ENCODE measurements at regions of chr2 and their contacts with region 1.

Region 1: GRCh38 chr2:10457911-10458604 is 9.9 kb upstream of the ODC1 start:
- ATAC-seq: peak in 2 of 8 experiments; percentile 43 to 46
- H3K4me3 ChIP-seq: no peak overlapping the region
- H3K27ac ChIP-seq: no peak overlapping the region
- H3K4me1 ChIP-seq: peaks cover 7 to 13% of the 10 kb centered on the region in 2 donors

Region 2: GRCh38 chr2:9897331-9897737 is 560.7 kb before region 1 on chr2:
- in situ Hi-C with region 1: no loop called
- ATAC-seq: peak in 5 of 8 experiments; percentile 16 to 97 (median 65)
- H3K4me3 ChIP-seq: no peak overlapping the region
- H3K27ac ChIP-seq: no peak overlapping the region
- H3K4me1 ChIP-seq: peaks cover 10 to 25% of the 10 kb centered on the region in 2 donors

Region 3: DNA sequence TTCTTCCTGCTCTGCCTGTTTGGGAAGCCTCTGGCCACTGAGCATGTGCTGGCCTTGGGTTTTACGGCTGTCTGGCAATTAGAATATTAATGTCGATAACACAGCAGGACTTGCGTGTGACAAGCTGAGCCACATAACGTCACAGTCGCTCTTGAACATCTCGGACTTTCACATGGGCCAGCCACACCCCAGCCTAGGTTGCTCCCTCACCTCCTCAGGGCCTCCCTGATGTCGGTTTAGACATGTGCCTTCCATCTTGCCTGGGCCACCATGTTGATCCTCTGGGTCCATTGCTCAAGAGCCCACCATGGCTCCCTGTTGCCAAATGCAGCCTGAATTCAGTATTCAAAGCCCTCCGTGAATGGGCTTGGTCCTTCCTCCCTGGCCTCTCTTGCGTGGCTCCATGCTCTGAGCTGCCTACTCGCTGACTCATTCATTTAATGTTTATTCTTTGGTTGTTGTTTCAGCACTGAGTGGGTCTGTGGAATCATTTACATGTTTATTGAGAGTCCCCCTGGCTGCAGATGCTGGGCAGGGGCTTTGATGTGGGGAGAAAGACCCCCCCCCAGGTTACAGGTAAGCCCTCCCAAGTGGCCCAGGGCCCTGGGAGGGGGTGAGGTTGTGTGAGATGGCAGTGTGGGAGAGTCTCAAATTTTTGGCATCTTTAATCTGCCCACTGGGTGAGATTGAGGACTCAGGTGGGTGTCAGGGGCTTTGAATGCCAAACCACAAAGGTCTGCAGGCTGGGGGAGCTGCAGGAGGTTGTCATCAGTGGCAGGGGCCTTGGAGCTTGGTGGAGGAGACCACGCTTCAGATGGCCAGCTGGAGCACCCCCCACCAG is 71.9 kb before region 1 on chr2:
- in situ Hi-C with region 1: no loop called
- ATAC-seq: peak; percentile 37 to 67 (median 60)
- H3K4me3 ChIP-seq: no peak overlapping the region
- H3K27ac ChIP-seq: no peak overlapping the region
- H3K4me1 ChIP-seq: peaks cover 30% of the 10 kb centered on the region in 2 donors

Region 4: DNA sequence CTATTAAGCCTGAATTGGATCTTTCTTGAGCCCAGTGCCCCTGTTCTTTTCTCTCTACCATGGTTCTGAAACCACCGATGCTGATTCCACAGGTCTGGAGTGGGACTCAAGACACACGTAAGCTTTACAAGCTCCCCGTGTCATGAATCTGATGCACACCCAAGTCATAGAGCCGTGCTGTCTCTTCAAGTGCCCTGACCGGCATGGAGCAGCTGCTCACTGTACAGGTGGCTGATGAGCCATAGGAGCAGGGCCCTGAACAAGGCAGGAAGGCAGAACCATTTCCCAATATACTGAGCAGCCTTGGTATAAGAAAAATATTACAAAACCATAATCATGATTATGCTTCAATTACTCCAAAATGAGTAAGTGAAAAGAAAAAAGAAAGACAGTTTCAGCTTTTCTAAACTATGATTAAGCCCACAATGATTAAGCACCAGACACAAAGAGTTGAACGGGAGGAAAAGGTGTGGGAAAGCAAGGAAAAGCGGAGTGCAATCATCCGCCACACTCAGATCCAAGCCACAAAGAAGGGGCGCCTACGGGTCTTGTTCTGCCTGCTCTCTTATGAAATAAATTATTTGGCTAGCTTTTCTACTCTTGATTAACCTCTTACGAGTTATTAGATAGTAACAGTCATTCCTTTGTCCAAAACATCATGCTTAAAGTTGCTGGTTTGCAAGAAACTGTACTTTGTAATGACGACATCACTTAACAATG is 190.0 kb after region 1 on chr2:
- in situ Hi-C with region 1: loop called in 4 of 9 experiments (anchors 25 kb)
- ATAC-seq: no peak
- H3K4me3 ChIP-seq: no peak overlapping the region
- H3K27ac ChIP-seq: no peak overlapping the region
- H3K4me1 ChIP-seq: no peaks in the 10 kb centered on the region

Region 5: DNA sequence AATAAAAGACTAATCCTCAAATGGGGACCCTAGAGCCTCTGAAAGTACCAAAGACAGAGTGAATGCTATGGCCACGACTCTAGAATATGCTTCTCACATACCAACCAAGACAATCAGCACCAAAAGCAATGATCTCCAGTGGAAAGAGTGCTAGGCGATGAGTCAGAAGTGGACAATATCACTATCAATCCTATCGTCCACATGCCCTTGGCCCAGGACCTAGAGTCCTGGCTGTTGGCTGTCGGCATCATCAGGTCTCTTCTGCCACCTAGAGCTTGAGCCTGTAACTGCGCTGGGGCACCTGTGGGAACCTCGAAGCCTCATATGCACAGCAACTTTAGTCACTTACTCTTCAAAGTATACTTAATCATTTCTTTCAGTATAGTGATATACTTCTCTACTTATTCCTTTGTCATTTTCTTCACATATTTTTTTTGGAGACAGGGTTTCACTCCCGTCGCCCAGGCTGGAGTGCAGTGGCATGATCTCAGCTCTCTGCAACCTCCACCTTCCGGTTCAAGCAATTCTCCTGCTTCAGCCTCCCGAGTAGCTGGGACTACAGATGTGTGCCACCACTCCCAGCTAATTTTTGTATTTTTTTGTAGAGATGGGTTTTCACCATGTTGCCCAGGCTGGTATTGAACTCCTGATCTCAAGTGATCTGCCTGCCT is 202.0 kb after region 1 on chr2:
- in situ Hi-C with region 1: loop called in 3 of 9 experiments (anchors 25 kb)
- ATAC-seq: peak in 7 of 8 experiments; percentile 25 to 86 (median 73)
- H3K4me3 ChIP-seq: no peak overlapping the region
- H3K27ac ChIP-seq: no peak overlapping the region
- H3K4me1 ChIP-seq: no peaks in the 10 kb centered on the region

Measured in motor neuron (in vitro differentiated cells).